CD14-positive monocyte (primary cell): ENCODE measurements at regions of chr12 and their contacts with region 1.

Region 1: GRCh38 chr12:47408171-47408871 is 297.5 kb downstream of the RPAP3 start:
- DNase-seq: peak; percentile 42 to 70 (median 61)
- H3K4me3 ChIP-seq: no peak overlapping the region
- H3K4me3 Mint-ChIP-seq: no peak overlapping the region
- H3K27ac ChIP-seq: no peak overlapping the region
- H3K27ac Mint-ChIP-seq: no peak overlapping the region
- H3K4me1 ChIP-seq: no peaks in the 10 kb centered on the region
- H3K4me1 Mint-ChIP-seq: peaks cover 3% of the 10 kb centered on the region
- H3K27me3 ChIP-seq: no peaks in the 10 kb centered on the region
- H3K27me3 Mint-ChIP-seq: peaks cover 1 to 6% (median 5%) of the 10 kb centered on the region in 3 donors
- CTCF ChIP-seq: peak; percentile 61

Region 2: DNA sequence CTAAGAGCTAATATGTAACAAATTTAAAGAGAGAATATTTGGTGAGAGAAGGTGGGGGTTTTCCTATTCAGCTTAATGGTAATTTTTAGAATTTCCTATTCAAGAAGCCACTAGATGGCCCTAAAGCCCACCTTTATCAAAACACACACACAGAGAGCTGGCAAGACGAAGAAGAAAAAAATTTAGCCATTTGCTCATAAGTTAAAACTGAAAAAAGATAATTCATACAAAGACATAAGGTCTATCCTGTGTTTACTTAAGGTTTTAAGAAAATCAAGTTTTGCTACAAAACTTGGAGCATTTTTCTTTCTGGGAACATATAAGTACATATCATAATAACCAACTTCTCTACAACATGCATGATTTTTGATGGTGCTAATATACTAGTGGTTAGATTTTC is 375.7 kb before region 1 on chr12:
- intact Hi-C with region 1: loop called in 1 of 2 experiments (anchors 5 kb)
- DNase-seq: peak; percentile 20 to 35 (median 28)
- H3K4me3 ChIP-seq: no peak overlapping the region
- H3K4me3 Mint-ChIP-seq: no peak overlapping the region
- H3K27ac ChIP-seq: no peak overlapping the region
- H3K27ac Mint-ChIP-seq: no peak overlapping the region
- H3K4me1 ChIP-seq: no peaks in the 10 kb centered on the region
- H3K4me1 Mint-ChIP-seq: no peaks in the 10 kb centered on the region
- H3K27me3 ChIP-seq: no peaks in the 10 kb centered on the region
- H3K27me3 Mint-ChIP-seq: peaks cover 0 to 8% (median 2%) of the 10 kb centered on the region in 3 donors
- CTCF ChIP-seq: peak; percentile 71

Region 3: DNA sequence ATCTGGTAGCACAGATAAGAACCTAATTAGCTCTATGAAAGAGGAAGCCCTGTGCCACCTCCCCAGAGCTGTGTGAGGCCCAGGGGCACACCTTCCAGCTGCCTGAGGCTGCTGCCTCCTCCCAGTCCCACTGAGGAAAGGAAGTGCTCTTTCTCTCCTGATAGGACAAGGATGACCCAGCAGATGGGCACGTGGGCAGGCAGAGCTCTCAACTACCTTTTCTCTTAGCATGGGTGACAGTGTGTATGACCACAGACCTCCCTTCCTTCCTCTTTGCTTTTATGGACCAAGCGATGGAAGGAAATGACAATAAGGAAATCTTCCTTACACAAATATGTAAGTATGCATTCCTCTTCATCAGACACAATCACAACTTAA is 201.0 kb before region 1 on chr12:
- intact Hi-C with region 1: loop called in 1 of 2 experiments (anchors 10 kb)
- DNase-seq: peak; percentile 80 to 90 (median 85)
- H3K4me3 ChIP-seq: peak overlapping the region in 1 of 3 experiments; percentile 19
- H3K4me3 Mint-ChIP-seq: peak overlapping the region; percentile 12 to 53
- H3K27ac ChIP-seq: peak overlapping the region; percentile 19 to 69
- H3K27ac Mint-ChIP-seq: peak overlapping the region; percentile 83 to 93 (median 86)
- H3K4me1 ChIP-seq: peaks cover 37 to 41% of the 10 kb centered on the region in 2 donors
- H3K4me1 Mint-ChIP-seq: peaks cover 42% of the 10 kb centered on the region
- H3K27me3 ChIP-seq: no peaks in the 10 kb centered on the region
- H3K27me3 Mint-ChIP-seq: peaks cover 0 to 2% (median 0%) of the 10 kb centered on the region in 3 donors
- CTCF ChIP-seq: no peak

Region 4: GRCh38 chr12:47488888-47489287 is 80.6 kb after region 1 on chr12:
- intact Hi-C with region 1: no loop called
- DNase-seq: no peak
- H3K4me3 ChIP-seq: no peak overlapping the region
- H3K4me3 Mint-ChIP-seq: no peak overlapping the region
- H3K27ac ChIP-seq: no peak overlapping the region
- H3K27ac Mint-ChIP-seq: no peak overlapping the region
- H3K4me1 ChIP-seq: no peaks in the 10 kb centered on the region
- H3K4me1 Mint-ChIP-seq: no peaks in the 10 kb centered on the region
- H3K27me3 ChIP-seq: no peaks in the 10 kb centered on the region
- H3K27me3 Mint-ChIP-seq: peaks cover 1 to 8% (median 2%) of the 10 kb centered on the region in 3 donors
- CTCF ChIP-seq: no peak